Activated naive CD4-positive, alpha-beta T cell treated with anti-CD3 and anti-CD28 coated beads for 36 hours (primary cell): ENCODE measurements at regions of chr1 and their contacts with region 1.

Region 1: DNA sequence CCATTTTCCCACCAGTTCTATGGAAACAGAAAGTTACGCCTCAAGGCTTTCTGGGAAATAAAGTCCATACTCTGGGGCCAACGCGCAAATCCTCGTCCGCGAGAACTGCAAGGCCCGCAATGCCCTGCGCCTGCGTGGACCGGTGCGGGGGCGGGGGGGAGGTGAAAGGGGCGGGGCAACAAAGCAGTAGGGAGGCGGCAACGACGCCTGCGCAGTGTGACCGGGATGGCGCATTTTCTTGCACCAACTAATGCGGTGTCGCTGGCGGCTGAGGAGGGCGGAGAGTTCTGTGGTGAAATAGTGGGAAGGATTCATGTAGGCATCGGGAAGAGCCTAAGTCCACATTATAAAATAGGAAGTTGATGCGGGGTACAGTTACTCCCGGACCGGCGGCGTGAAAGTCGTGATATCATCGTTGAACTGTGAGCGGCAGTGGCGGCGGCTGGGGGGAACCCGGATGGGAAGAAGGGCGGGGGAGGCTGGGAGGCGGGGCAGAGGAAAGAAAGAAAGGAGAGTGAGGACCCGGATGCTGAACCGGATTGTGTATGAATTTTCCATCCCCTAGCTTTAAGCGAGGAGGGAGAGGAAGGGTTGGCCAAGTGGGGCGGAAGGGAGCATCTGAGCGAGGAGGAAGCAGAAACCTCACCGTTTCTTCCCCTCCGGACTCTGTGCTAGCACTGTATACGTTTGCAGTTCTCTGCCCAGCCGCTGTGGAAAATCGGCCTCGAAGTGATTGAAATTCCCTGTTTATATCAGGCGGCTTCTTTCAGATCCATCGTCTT is at the start of gene GGPS1:
- DNase-seq: peak; percentile 99
- H3K4me3 Mint-ChIP-seq: no peak within 1 kb of the TSS
- H3K27ac Mint-ChIP-seq: peak within 1 kb of the TSS; percentile 94
- H3K4me1 Mint-ChIP-seq: peaks cover 31% of the 10 kb centered on the region
- H3K27me3 Mint-ChIP-seq: no peaks in the 10 kb centered on the region
- total RNA-seq, gene GGPS1: 35.3 to 36.9 TPM

Region 2: DNA sequence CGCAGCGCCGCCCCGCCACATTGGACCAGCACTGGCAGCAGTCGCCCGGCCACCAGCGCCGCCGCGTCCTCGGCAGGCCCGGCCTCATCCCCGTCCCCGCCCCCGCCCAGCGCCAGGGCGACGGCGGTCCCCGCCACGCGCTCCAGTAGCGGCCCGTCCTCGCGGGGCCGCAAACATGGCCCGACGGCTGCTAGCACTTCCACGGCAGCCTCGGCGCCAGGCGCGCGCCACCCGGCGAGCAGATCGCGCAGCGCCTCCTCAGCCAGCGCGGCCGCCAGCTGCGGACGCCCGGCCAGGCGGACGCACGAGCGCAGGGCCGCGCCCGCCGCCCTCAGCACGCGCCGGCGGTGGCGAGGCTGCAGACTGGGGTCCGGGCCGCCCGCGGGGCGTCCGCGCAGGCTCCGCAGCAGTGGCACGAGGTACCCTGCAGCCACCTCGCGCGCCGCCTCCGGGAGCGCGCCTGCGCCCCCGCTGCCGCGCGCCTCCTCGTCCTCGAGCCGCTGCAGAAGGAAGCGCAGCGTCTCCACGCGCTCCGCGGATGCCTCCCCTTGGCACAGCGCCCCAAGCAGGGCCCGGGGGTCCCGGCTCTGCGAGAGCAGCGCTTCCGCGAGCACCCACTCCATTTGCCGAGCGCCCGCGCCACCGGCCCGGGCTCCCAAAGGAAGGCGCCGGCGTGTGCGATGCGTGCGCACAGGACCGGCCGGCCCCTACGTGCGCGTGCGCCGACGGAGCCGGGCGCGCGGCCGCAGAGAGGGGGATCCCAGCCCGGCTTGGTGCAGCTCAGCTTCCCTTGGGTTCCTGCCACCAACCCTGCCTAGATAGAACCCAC is 849.9 kb before region 1 on chr1 and contains the start of gene TARBP1:
- CTCF ChIA-PET with region 1: no interaction called
- intact Hi-C with region 1: loop called (anchors 2 kb)
- DNase-seq: peak; percentile 77
- H3K4me3 Mint-ChIP-seq: peak within 1 kb of the TSS; percentile 79
- H3K27ac Mint-ChIP-seq: peak within 1 kb of the TSS; percentile 46
- H3K4me1 Mint-ChIP-seq: peaks cover 49% of the 10 kb centered on the region
- H3K27me3 Mint-ChIP-seq: peaks cover 12% of the 10 kb centered on the region
- total RNA-seq, gene TARBP1: 40.2 to 41.6 TPM

Region 3: GRCh38 chr1:234842726-234843641 is 485.6 kb before region 1 on chr1:
- CTCF ChIA-PET with region 1: no interaction called
- intact Hi-C with region 1: loop called (anchors 2 kb)
- DNase-seq: peak; percentile 95
- H3K4me3 Mint-ChIP-seq: peak overlapping the region; percentile 62
- H3K27ac Mint-ChIP-seq: peak overlapping the region; percentile 96
- H3K4me1 Mint-ChIP-seq: peaks cover 85% of the 10 kb centered on the region
- H3K27me3 Mint-ChIP-seq: no peaks in the 10 kb centered on the region

Region 4: GRCh38 chr1:235128456-235129328 is 199.9 kb before region 1 on chr1 and contains the start of gene TOMM20:
- CTCF ChIA-PET with region 1: no interaction called
- intact Hi-C with region 1: loop called (anchors 1 kb)
- DNase-seq: peak; percentile 98
- H3K4me3 Mint-ChIP-seq: peak within 1 kb of the TSS; percentile 96
- H3K27ac Mint-ChIP-seq: peak within 1 kb of the TSS; percentile 94
- H3K4me1 Mint-ChIP-seq: peaks cover 38% of the 10 kb centered on the region
- H3K27me3 Mint-ChIP-seq: no peaks in the 10 kb centered on the region
- total RNA-seq, gene TOMM20: 155 to 192 TPM

Region 5: GRCh38 chr1:235253219-235253962 is 75.2 kb before region 1 on chr1:
- CTCF ChIA-PET with region 1: interaction called, 4 read pairs
- intact Hi-C with region 1: loop called (anchors 1 kb)
- DNase-seq: peak; percentile 79
- H3K4me3 Mint-ChIP-seq: no peak overlapping the region
- H3K27ac Mint-ChIP-seq: no peak overlapping the region
- H3K4me1 Mint-ChIP-seq: peaks cover 30% of the 10 kb centered on the region
- H3K27me3 Mint-ChIP-seq: no peaks in the 10 kb centered on the region

Region 6: DNA sequence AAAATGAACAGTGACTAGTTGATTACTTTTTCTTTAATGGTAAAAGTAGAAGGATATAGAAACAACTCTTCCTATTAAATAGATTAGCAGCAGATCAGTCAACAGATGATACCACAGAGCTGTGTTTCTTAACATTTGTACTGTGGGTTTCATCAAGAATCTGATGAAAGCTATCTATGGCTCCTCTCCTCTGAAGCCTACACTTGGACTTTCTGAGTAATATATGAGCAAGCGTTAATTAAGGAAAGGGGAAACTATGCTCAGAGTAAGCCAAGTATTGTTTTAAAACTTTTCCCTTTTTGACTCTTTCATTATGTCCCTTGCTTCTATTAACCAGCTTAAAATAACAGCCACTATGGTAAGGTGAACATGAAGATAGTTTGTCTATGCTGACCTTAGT is 11.4 kb before region 1 on chr1:
- CTCF ChIA-PET with region 1: interaction called, 3 read pairs
- intact Hi-C with region 1: loop called (anchors 1 kb)
- DNase-seq: no peak
- H3K4me3 Mint-ChIP-seq: no peak overlapping the region
- H3K27ac Mint-ChIP-seq: peak overlapping the region; percentile 60
- H3K4me1 Mint-ChIP-seq: peaks cover 75% of the 10 kb centered on the region
- H3K27me3 Mint-ChIP-seq: no peaks in the 10 kb centered on the region

Region 7: GRCh38 chr1:235504496-235505222 is 176.1 kb after region 1 on chr1:
- CTCF ChIA-PET with region 1: no interaction called
- intact Hi-C with region 1: loop called (anchors 1 kb)
- DNase-seq: peak; percentile 99
- H3K4me3 Mint-ChIP-seq: peak overlapping the region; percentile 97
- H3K27ac Mint-ChIP-seq: peak overlapping the region; percentile 97
- H3K4me1 Mint-ChIP-seq: peaks cover 31% of the 10 kb centered on the region
- H3K27me3 Mint-ChIP-seq: no peaks in the 10 kb centered on the region